IMR-90 (cell line): ENCODE measurements at regions of chr10 and their contacts with region 1.

Region 1: GRCh38 chr10:48656241-48656913 is 28.3 kb upstream of the WDFY4 start:
- DNase-seq: peak; percentile 88
- ATAC-seq: peak; percentile 93
- H3K4me3 ChIP-seq: peak overlapping the region; percentile 47
- H3K27ac ChIP-seq: no peak overlapping the region; the same call in 1 of the 2 replicates
- H3K4me1 ChIP-seq: peaks cover 7% of the 10 kb centered on the region; the same call in 1 of the 2 replicates
- H3K27me3 ChIP-seq: peaks cover 6% of the 10 kb centered on the region
- CTCF ChIP-seq: peak; percentile 100
- POLR2A ChIP-seq: no peak
- RAD21 ChIP-seq: peak; percentile 100

Region 2: GRCh38 chr10:48300556-48300955 is 355.8 kb before region 1 on chr10:
- CTCF ChIA-PET with region 1: no interaction called
- POLR2A ChIA-PET with region 1: no interaction called
- dilution Hi-C with region 1: no loop called
- in situ Hi-C with region 1: no loop called
- intact Hi-C with region 1: no loop called
- DNase-seq: no peak
- ATAC-seq: no peak
- H3K4me3 ChIP-seq: no peak overlapping the region
- H3K27ac ChIP-seq: no peak overlapping the region
- H3K4me1 ChIP-seq: no peaks in the 10 kb centered on the region
- H3K27me3 ChIP-seq: peaks cover 30% of the 10 kb centered on the region
- CTCF ChIP-seq: no peak
- POLR2A ChIP-seq: no peak
- RAD21 ChIP-seq: no peak

Region 3: GRCh38 chr10:48363617-48364355 is 292.6 kb before region 1 on chr10:
- CTCF ChIA-PET with region 1: interaction called, 12 read pairs
- POLR2A ChIA-PET with region 1: no interaction called
- dilution Hi-C with region 1: no loop called
- in situ Hi-C with region 1: loop called (anchors 5 kb)
- intact Hi-C with region 1: loop called (anchors 1 kb)
- DNase-seq: peak; percentile 80
- ATAC-seq: peak; percentile 81
- H3K4me3 ChIP-seq: no peak overlapping the region
- H3K27ac ChIP-seq: no peak overlapping the region
- H3K4me1 ChIP-seq: peaks cover 7% of the 10 kb centered on the region; the same call in 1 of the 2 replicates
- H3K27me3 ChIP-seq: no peaks in the 10 kb centered on the region
- CTCF ChIP-seq: peak; percentile 87
- POLR2A ChIP-seq: no peak
- RAD21 ChIP-seq: peak; percentile 94

Region 4: GRCh38 chr10:48501787-48502771 is 154.3 kb before region 1 on chr10:
- CTCF ChIA-PET with region 1: no interaction called
- POLR2A ChIA-PET with region 1: no interaction called
- dilution Hi-C with region 1: no loop called
- in situ Hi-C with region 1: no loop called
- intact Hi-C with region 1: no loop called
- DNase-seq: peak; percentile 40
- ATAC-seq: peak; percentile 22; the same call in 1 of the 2 replicates
- H3K4me3 ChIP-seq: no peak overlapping the region
- H3K27ac ChIP-seq: no peak overlapping the region
- H3K4me1 ChIP-seq: peaks cover 17% of the 10 kb centered on the region
- H3K27me3 ChIP-seq: no peaks in the 10 kb centered on the region
- CTCF ChIP-seq: no peak
- POLR2A ChIP-seq: no peak
- RAD21 ChIP-seq: no peak

Region 5: GRCh38 chr10:48536916-48537890 is 119.2 kb before region 1 on chr10:
- CTCF ChIA-PET with region 1: interaction called, 10 read pairs
- POLR2A ChIA-PET with region 1: no interaction called
- dilution Hi-C with region 1: no loop called
- in situ Hi-C with region 1: no loop called
- intact Hi-C with region 1: no loop called
- DNase-seq: no peak
- ATAC-seq: no peak
- H3K4me3 ChIP-seq: no peak overlapping the region
- H3K27ac ChIP-seq: no peak overlapping the region
- H3K4me1 ChIP-seq: peaks cover 4% of the 10 kb centered on the region; the same call in 1 of the 2 replicates
- H3K27me3 ChIP-seq: no peaks in the 10 kb centered on the region
- CTCF ChIP-seq: no peak
- POLR2A ChIP-seq: no peak
- RAD21 ChIP-seq: no peak

Region 6: GRCh38 chr10:48608279-48608681 is 48.1 kb before region 1 on chr10:
- CTCF ChIA-PET with region 1: interaction called, 48 read pairs
- POLR2A ChIA-PET with region 1: no interaction called
- dilution Hi-C with region 1: no loop called
- in situ Hi-C with region 1: no loop called
- intact Hi-C with region 1: loop called (anchors 2 kb)
- DNase-seq: no peak
- ATAC-seq: no peak
- H3K4me3 ChIP-seq: no peak overlapping the region
- H3K27ac ChIP-seq: peak overlapping the region; percentile 7; the same call in 1 of the 2 replicates
- H3K4me1 ChIP-seq: peaks cover 39% of the 10 kb centered on the region
- H3K27me3 ChIP-seq: no peaks in the 10 kb centered on the region
- CTCF ChIP-seq: peak; percentile 54
- POLR2A ChIP-seq: no peak
- RAD21 ChIP-seq: peak; percentile 30; the same call in 1 of the 2 replicates

Region 7: DNA sequence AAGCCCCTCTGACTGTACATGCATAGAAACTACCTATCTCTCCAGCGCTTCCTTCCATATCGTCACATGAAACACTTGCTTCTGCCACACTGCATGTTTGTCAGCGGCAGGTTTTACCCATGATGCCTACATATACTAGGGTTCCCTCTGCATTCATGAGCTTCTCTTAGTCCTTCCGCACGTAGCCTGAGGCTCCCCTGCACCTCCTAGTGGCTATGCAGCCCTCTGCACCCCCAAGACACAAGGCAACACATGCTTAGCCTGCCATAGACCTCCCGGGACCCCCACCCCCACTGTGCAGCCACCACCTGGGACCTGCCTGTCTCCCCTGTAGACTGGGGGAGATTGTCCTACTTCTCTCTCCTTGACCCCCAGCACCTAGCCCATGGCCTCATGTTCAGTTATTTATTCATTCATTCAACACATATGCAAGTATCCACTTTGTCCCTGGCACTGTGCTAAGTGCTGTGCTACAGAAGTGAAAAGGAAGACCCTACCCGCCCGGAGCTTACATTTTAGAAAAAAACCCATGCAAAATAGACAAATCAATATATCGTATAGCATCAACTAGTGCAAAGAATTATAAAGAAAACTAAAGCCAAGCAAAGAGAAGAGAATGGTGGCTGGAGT is 508.3 kb after region 1 on chr10:
- CTCF ChIA-PET with region 1: no interaction called
- POLR2A ChIA-PET with region 1: no interaction called
- dilution Hi-C with region 1: no loop called
- in situ Hi-C with region 1: no loop called
- intact Hi-C with region 1: loop called (anchors 5 kb)
- DNase-seq: peak; percentile 35
- ATAC-seq: 0 out of 2 replicates have a peak, but pooled peaks have one; percentile 31
- H3K4me3 ChIP-seq: no peak overlapping the region
- H3K27ac ChIP-seq: no peak overlapping the region
- H3K4me1 ChIP-seq: peaks cover 13% of the 10 kb centered on the region
- H3K27me3 ChIP-seq: no peaks in the 10 kb centered on the region
- CTCF ChIP-seq: peak; percentile 47
- POLR2A ChIP-seq: no peak
- RAD21 ChIP-seq: peak; percentile 56

Region 8: GRCh38 chr10:49518982-49519578 is 862.7 kb after region 1 on chr10:
- CTCF ChIA-PET with region 1: interaction called, 11 read pairs
- POLR2A ChIA-PET with region 1: no interaction called
- dilution Hi-C with region 1: no loop called
- in situ Hi-C with region 1: loop called (anchors 5 kb)
- intact Hi-C with region 1: loop called (anchors 2 kb)
- DNase-seq: peak; percentile 54
- ATAC-seq: peak; percentile 93
- H3K4me3 ChIP-seq: no peak overlapping the region
- H3K27ac ChIP-seq: no peak overlapping the region
- H3K4me1 ChIP-seq: no peaks in the 10 kb centered on the region
- H3K27me3 ChIP-seq: no peaks in the 10 kb centered on the region
- CTCF ChIP-seq: peak; percentile 78
- POLR2A ChIP-seq: no peak
- RAD21 ChIP-seq: peak; percentile 78